ENCODE measurements at regions of chr2 and their contacts with region 1.

Region 1: DNA sequence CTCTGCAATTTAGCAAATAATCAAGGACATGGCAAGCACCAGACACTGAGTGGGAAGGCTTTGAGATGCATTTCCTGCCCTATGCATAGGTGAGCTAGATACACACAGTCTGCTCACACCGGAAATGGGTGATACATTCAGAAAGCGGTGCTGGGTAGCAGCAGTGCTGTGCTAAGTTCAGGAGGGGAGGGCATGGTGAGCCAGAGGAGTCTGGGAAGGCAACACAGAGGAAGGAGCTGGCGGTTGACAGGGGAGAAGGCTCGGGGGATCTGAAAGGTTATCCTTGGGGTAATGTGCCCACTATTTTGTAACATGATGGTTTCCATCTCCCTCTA is 57.4 kb upstream of the EPAS1 start:
- DNase-seq: peak; percentile 15 to 67 (median 62)
- ATAC-seq: peak; percentile 92
- H3K4me3 ChIP-seq: no peak overlapping the region
- H3K4me3 Mint-ChIP-seq: peak overlapping the region in 7 of 10 donors; percentile 10 to 76 (median 49)
- H3K27ac ChIP-seq: peak overlapping the region; percentile 36
- H3K27ac Mint-ChIP-seq: peak overlapping the region; percentile 79 to 94 (median 88)
- H3K4me1 ChIP-seq: peaks cover 17 to 21% of the 10 kb centered on the region in 2 donors
- H3K4me1 Mint-ChIP-seq: peaks cover 16 to 52% (median 41%) of the 10 kb centered on the region in 7 donors
- H3K27me3 ChIP-seq: no peaks in the 10 kb centered on the region
- H3K27me3 Mint-ChIP-seq: peaks cover 0 to 2% (median 0%) of the 10 kb centered on the region in 5 donors

Region 2: GRCh38 chr2:46200220-46200621 is 39.6 kb before region 1 on chr2:
- CTCF ChIA-PET with region 1: no interaction called
- POLR2A ChIA-PET with region 1: no interaction called
- intact Hi-C with region 1: loop called in 1 of 2 experiments (anchors 5 kb)
- DNase-seq: no peak
- ATAC-seq: no peak
- H3K4me3 ChIP-seq: no peak overlapping the region
- H3K4me3 Mint-ChIP-seq: peak overlapping the region in 1 of 10 donors; percentile 2
- H3K27ac ChIP-seq: no peak overlapping the region
- H3K27ac Mint-ChIP-seq: peak overlapping the region in 5 of 9 donors; percentile 3 to 53 (median 39)
- H3K4me1 ChIP-seq: peaks cover 0 to 5% of the 10 kb centered on the region in 2 donors
- H3K4me1 Mint-ChIP-seq: peaks cover 17 to 60% (median 31%) of the 10 kb centered on the region in 7 donors
- H3K27me3 ChIP-seq: no peaks in the 10 kb centered on the region
- H3K27me3 Mint-ChIP-seq: no peaks in the 10 kb centered on the region

Region 3: DNA sequence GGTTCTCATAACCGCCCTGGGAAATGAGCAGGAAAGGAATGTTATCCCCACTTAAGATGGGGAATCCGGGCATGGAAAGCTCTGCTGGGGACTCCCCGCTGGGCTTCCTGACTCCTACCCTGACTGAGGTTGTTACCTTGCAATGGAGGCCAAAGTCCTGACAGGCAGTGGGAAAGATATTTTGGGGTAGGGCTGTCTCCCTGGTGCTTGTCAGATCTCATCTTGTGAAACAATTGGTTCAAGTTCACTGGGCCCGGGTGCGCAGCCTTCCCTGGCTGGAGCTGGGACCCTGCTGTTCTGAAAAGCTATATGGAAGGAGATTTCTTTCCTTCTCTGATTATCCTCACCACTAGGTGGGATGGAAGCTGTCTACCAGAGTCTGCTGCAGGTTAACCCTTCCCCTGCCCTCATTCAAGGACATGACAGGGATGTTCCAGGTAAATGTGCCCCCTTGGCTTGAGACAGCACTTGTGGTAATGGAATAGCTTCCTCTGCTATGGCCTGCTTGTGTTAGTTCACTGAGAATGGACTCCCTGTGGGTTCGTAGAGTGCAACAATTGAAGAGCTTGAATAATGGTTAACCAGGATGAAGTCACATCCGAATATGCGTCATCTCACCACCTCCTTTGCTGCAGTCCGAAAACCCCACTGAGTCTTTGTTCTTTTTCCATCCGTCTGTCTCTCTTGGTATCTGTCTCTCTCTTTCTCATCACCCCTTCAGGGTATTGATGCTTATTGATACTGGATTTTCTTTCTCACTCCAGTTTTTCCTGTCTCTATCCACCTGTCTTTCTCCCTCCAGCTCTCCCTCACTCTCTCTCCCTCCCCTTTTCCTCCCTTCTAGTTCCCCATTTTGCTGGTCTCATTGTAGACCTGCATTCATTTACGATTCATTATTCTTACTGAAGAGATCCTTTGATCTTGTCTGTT is 10.4 kb before region 1 on chr2:
- CTCF ChIA-PET with region 1: interaction called, 3 read pairs
- POLR2A ChIA-PET with region 1: interaction called, 3 read pairs
- intact Hi-C with region 1: loop called in 1 of 2 experiments (anchors 1 kb)
- DNase-seq: no peak
- ATAC-seq: peak; percentile 46
- H3K4me3 ChIP-seq: no peak overlapping the region
- H3K4me3 Mint-ChIP-seq: peak overlapping the region in 1 of 10 donors; percentile 58
- H3K27ac ChIP-seq: no peak overlapping the region
- H3K27ac Mint-ChIP-seq: peak overlapping the region in 3 of 9 donors; percentile 13 to 91 (median 58)
- H3K4me1 ChIP-seq: peaks cover 0 to 4% of the 10 kb centered on the region in 2 donors
- H3K4me1 Mint-ChIP-seq: peaks cover 0 to 39% (median 10%) of the 10 kb centered on the region in 7 donors
- H3K27me3 ChIP-seq: no peaks in the 10 kb centered on the region
- H3K27me3 Mint-ChIP-seq: peaks cover 0 to 24% (median 0%) of the 10 kb centered on the region in 5 donors

Region 4: GRCh38 chr2:46749042-46749531 is 509.3 kb after region 1 on chr2:
- CTCF ChIA-PET with region 1: no interaction called
- POLR2A ChIA-PET with region 1: no interaction called
- intact Hi-C with region 1: no loop called
- DNase-seq: no peak
- ATAC-seq: no peak
- H3K4me3 ChIP-seq: no peak overlapping the region
- H3K4me3 Mint-ChIP-seq: no peak overlapping the region
- H3K27ac ChIP-seq: no peak overlapping the region
- H3K27ac Mint-ChIP-seq: no peak overlapping the region
- H3K4me1 ChIP-seq: no peaks in the 10 kb centered on the region
- H3K4me1 Mint-ChIP-seq: peaks cover 4 to 78% (median 51%) of the 10 kb centered on the region in 7 donors
- H3K27me3 ChIP-seq: no peaks in the 10 kb centered on the region
- H3K27me3 Mint-ChIP-seq: no peaks in the 10 kb centered on the region